Activated CD4-positive, alpha-beta memory T cell treated with anti-CD3 and anti-CD28 coated beads for 36 hours (primary cell): ENCODE measurements at regions of chr11 and their contacts with region 1.

Region 1: GRCh38 chr11:27497284-27497866 is 9.2 kb downstream of the LIN7C start:
- DNase-seq: no peak
- H3K4me3 Mint-ChIP-seq: no peak overlapping the region
- H3K27ac Mint-ChIP-seq: no peak overlapping the region
- H3K4me1 Mint-ChIP-seq: peaks cover 21% of the 10 kb centered on the region
- H3K27me3 Mint-ChIP-seq: no peaks in the 10 kb centered on the region

Region 2: DNA sequence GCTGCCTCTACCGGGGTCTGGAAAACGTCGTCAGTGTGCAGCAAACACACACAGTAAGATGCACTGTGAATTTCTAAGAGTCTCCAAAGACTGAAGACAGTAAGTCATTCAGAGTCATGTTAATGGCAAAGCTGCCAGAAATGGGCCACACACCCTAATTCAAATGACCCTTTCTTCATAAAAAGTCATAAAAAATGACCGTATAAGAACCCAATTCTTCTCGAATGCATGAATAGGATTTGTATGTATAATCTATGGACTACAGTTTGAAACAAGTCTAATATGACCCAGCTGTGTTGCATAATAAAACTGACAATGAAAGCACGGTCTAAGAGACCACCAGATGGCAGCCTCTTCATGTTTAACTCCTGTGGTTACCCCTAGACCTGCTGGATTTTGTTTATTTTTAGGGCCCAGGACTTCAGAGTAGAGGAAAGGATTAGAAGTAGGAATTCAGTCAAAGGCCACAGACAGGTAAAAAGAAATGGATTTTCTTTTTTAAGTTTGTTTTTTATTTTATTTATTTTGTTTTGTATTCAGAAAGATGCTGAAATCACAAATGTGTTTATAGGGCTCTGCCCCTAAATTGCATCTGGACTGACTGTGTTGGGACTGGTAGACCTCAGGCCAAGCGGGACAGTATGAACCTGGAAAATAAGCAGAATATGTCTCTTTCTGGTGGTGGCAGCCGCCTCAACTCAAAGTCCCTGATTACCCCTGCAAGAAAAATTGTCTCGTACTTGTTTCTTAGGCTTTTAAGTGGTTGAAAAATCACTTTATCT is 743.5 kb before region 1 on chr11:
- CTCF ChIA-PET with region 1: no interaction called
- POLR2A ChIA-PET with region 1: no interaction called
- intact Hi-C with region 1: loop called (anchors 5 kb)
- DNase-seq: no peak
- H3K4me3 Mint-ChIP-seq: no peak overlapping the region
- H3K27ac Mint-ChIP-seq: no peak overlapping the region
- H3K4me1 Mint-ChIP-seq: no peaks in the 10 kb centered on the region
- H3K27me3 Mint-ChIP-seq: no peaks in the 10 kb centered on the region

Region 3: DNA sequence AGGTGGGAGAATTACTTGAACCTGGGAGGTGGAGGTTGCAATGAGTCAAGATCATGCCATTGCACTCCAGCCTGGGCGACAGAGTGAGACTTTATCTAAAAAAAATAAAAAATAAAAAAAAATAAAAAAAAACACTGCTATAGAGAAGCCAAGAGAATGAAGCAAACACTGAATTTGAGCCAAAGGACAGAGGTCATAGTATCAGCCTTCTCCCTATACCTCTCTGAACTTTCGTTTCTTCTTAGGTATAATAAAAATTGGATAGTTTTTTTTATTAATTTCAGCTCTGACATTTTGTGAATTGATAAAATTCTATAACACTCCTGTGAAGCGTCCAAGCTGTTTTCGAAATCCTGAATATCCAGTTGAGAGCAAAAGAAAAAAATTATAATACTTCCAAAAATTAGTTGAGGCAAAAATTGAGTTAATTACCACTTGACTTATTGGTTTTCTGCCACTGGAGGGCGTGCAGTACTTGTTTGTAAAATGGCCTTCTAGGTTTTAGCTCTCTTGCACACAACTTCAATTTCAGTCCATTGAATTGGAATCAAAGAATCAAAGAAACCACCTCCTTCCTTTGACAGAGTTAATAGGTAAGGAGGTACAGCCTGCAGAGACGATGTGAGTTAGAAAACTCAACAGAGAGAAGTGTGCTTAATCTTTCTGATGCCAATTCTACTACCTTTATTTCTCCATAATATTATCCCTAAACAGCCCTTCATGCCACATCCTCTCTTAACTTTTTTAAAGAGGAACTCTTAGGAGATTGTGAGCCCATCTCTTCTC is 313.5 kb before region 1 on chr11:
- CTCF ChIA-PET with region 1: interaction called, 24 read pairs
- POLR2A ChIA-PET with region 1: no interaction called
- intact Hi-C with region 1: no loop called
- DNase-seq: peak; percentile 36
- H3K4me3 Mint-ChIP-seq: no peak overlapping the region
- H3K27ac Mint-ChIP-seq: no peak overlapping the region
- H3K4me1 Mint-ChIP-seq: no peaks in the 10 kb centered on the region
- H3K27me3 Mint-ChIP-seq: peaks cover 4% of the 10 kb centered on the region

Region 4: DNA sequence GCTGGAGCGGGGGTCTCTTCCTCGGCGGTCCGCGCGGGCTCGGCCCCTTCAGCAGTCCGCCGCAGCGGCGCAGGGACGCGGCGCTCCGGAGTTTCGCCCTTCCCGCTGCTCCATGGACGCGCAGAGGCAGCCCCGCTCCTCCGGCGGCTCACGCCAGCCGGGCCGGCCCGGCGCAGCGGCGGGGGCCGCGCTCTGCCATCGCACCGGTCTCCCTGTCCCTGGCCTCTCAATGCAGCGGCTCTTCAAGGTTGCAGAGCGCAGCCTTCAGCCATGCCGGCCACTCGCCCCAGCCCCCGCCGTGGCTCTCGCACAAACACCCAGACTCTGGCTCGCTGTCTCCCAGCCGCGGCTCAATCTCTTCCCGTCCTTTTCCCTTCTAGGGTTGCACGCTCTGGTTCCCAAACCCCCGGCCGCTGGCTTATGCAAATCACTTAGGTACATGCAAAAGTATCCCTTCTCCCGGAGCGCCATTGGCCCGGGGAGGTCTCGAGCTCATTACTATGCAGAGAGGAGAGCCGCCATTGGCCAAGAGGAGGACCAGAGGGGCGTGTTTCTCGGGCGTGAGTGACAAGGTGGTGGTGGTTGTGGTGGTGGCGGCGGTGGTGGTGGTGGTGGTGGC is 24.9 kb before region 1 on chr11 and contains the start of gene LGR4:
- CTCF ChIA-PET with region 1: interaction called, 12 read pairs
- POLR2A ChIA-PET with region 1: no interaction called
- intact Hi-C with region 1: no loop called
- DNase-seq: peak; percentile 79
- H3K4me3 Mint-ChIP-seq: peak within 1 kb of the TSS; percentile 86
- H3K27ac Mint-ChIP-seq: no peak within 1 kb of the TSS
- H3K4me1 Mint-ChIP-seq: peaks cover 16% of the 10 kb centered on the region
- H3K27me3 Mint-ChIP-seq: peaks cover 20% of the 10 kb centered on the region
- total RNA-seq, gene LGR4: 0.22 to 0.67 TPM